IMR-90 (cell line): ENCODE measurements at regions of chr3 and their contacts with region 1.

Region 1: GRCh38 chr3:126259411-126260391 is 79.3 kb upstream of the ALDH1L1 start:
- DNase-seq: peak; percentile 10
- ATAC-seq: peak; percentile 67
- H3K4me3 ChIP-seq: no peak overlapping the region
- H3K27ac ChIP-seq: peak overlapping the region; percentile 36; the same call in 1 of the 2 replicates
- H3K4me1 ChIP-seq: peaks cover 6% of the 10 kb centered on the region; the same call in 1 of the 2 replicates
- H3K27me3 ChIP-seq: no peaks in the 10 kb centered on the region; the same call in 1 of the 2 replicates
- CTCF ChIP-seq: peak; percentile 65
- POLR2A ChIP-seq: no peak
- RAD21 ChIP-seq: peak; percentile 74

Region 2: DNA sequence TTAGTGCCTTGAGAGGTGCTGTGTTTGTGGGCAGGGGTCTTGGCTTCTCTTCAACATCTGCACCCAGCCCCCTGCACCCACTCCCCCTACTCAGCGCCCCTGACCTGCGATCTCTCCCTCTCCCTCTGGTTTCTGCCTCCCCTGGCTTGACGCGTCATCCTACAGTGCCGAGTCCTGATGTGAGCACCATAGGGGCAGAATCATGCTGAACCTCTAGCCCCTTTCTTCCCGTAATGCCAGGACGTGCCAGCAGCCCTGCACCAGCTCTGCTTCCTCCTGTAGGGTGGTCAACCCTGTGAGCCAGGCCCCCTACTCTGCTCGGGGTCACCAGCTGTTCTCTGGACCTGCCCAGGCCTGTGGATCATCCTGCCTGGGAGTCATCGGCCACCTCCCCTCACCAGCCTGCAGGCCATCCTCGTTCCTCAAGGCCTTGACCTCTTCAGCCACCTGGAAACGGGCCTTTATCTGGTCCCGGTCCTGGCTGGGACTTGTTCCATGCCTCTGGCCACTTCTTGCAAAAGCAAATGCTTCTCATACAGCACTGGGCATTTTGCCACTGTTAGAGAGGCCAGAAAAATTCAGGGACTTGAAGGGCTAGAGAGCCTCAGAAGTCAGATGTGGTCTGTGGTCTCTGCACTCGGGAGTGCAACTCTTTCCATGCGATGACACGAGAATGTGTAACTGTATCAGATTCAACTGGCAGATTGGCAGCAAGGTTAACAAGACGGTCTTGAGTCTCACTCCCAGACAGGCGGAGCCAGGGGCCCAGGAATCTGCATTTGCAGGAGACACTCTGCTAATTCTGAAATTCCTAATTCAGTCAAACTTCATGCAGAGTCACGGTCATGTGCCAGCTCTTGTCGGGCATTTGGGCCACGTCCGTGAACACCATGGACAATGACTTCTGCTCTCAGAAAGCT is 114.2 kb after region 1 on chr3:
- CTCF ChIA-PET with region 1: no interaction called
- POLR2A ChIA-PET with region 1: no interaction called
- dilution Hi-C with region 1: no loop called
- in situ Hi-C with region 1: loop called (anchors 10 kb)
- intact Hi-C with region 1: no loop called
- DNase-seq: peak; percentile 43
- ATAC-seq: peak; percentile 44
- H3K4me3 ChIP-seq: no peak overlapping the region
- H3K27ac ChIP-seq: no peak overlapping the region
- H3K4me1 ChIP-seq: no peaks in the 10 kb centered on the region
- H3K27me3 ChIP-seq: peaks cover 27% of the 10 kb centered on the region
- CTCF ChIP-seq: no peak
- POLR2A ChIP-seq: no peak
- RAD21 ChIP-seq: no peak

Region 3: GRCh38 chr3:126475413-126476114 is 215.9 kb after region 1 on chr3 and contains the start of gene ZXDC:
- CTCF ChIA-PET with region 1: no interaction called
- POLR2A ChIA-PET with region 1: interaction called, 3 read pairs
- dilution Hi-C with region 1: no loop called
- in situ Hi-C with region 1: no loop called
- intact Hi-C with region 1: loop called (anchors 5 kb)
- DNase-seq: peak; percentile 91
- ATAC-seq: peak; percentile 90
- H3K4me3 ChIP-seq: peak within 1 kb of the TSS; percentile 77
- H3K27ac ChIP-seq: peak within 1 kb of the TSS; percentile 46
- H3K4me1 ChIP-seq: peaks cover 16% of the 10 kb centered on the region
- H3K27me3 ChIP-seq: no peaks in the 10 kb centered on the region; the same call in 1 of the 2 replicates
- CTCF ChIP-seq: peak; percentile 51
- POLR2A ChIP-seq: peak; percentile 76
- RAD21 ChIP-seq: peak; percentile 39
- total RNA-seq, gene ZXDC: 13.1 and 14.3 TPM in 2 replicates